Right ventricle myocardium superior (tissue), 1 donor: ENCODE measurements at regions of chr2 and their contacts with region 1.

Region 1: DNA sequence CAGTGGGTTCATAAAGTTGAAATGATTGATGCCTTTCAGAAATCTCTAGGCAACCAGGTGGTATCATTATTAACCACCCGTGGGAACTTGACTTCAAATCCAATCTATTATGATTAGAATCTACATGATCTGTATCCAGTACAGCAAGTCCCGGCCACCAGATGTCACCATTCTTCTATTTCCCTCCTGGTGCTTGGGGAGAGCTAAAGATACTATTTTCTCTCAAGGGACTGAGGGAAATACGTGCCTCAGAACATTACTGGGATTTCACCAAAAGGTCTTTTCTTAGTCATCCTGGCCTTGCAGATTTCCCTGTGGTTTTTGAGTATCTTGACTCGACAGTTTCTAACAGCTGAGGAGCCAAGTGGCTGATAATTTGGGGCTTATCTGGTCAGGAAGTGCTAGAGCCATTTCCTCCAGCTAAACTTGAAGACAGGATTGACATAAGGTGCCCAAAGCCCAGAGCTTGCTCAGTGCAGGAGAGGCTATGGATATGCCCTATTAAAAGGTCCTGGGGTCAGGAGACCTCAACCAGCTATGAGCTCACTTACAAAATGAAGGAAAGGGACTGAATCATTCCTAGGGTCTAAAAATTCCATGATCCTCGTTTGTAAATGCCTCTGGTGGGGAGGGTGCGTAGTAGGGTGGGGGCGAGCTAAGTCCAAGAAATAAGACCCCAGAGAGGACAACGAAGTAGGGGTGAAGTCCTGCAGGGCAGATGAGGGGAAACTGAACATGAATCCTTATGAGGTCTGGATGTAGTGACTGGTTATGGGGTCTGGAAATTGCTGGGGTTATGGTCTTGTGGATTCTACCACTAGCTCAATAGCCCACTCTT is 135.4 kb upstream of the MGAT5 start:
- DNase-seq: peak; percentile 85
- ATAC-seq: peak; percentile 63

Region 2: DNA sequence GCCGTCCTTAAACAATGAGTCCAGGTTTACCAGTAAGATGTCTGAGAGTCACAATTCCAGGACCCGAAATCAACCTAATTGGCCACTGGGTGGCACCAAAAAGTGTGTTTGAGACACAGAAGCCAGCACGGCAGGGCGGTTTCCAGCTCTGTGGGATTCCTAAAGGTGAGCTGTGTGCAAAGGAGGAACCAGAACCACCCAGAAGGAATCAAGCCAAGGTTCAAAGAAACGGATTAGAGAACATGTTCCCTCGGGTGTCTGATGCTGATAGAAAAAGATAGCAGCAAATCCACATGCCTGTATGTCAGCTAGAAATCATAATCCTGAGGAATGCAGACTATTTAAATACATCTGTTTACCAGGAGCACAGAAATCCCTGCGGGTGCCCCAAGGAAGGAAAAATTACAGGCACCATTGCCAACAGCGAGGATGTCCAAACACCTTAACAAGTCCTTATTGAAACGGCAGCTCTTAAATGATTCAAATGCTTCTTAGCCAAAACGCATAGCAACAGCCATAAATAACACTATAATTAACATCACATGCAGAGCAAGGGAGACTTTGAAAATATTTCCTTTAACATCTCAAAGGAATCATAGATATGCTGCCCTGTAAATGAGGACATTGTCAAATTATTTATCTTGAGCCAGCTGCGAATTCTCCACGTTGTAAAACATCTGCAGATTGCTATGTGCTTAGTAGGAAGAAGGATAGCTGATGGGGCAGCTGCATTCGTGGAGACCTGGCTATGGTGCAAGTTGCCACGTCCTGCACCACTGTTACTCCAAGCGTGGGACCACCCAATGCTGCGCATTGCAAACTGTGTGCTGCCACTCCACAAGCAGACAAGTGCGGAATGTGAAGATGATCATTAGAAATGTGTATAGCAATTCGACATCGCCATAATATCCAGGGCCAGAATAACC is 231.5 kb before region 1 on chr2:
- intact Hi-C with region 1: loop called (anchors 5 kb)
- DNase-seq: peak; percentile 79
- ATAC-seq: peak; percentile 88

Region 3: DNA sequence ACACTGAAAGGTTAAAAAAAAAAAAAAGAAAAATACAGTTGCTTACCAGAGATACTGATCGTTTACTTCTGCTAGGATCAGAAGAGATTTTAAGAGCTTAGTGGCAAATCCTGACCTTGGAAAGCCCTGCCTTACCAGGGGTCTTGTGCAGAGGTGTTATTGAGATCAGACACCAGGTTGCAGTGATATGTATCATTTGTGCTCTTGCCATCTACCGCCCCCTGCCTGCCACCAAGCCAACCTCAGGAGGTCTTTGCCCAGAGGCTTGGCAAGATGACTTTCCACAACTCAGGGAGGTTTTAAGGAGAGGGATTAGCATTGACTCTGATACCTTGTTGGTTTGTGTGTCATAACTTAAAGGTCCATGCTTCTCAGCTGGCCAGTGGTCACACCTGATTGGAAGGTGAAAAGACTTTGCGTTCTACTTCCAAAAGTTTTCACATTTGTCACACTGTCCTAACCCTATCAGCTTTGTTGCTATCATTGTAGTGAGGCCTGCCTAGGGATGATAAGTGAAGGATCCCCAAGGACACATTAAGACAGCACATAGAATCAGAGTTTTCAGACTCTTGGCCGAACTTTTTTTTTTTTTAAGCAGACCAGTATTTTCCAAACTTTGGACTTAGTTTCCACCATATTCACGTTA is 89.2 kb after region 1 on chr2:
- intact Hi-C with region 1: loop called (anchors 10 kb)
- DNase-seq: peak; percentile 62
- ATAC-seq: peak; percentile 67

Region 4: GRCh38 chr2:134253804-134254203 is 135.3 kb after region 1 on chr2 and contains the start of gene MGAT5:
- intact Hi-C with region 1: loop called (anchors 5 kb)
- DNase-seq: no peak
- ATAC-seq: no peak
- total RNA-seq, gene MGAT5: 82.8 TPM

Region 5: GRCh38 chr2:134411828-134412638 is 293.5 kb after region 1 on chr2:
- intact Hi-C with region 1: loop called (anchors 5 kb)
- DNase-seq: peak; percentile 64
- ATAC-seq: peak; percentile 93